Naive thymus-derived CD4-positive, alpha-beta T cell (primary cell): ENCODE measurements at regions of chr9 and their contacts with region 1.

Region 1: DNA sequence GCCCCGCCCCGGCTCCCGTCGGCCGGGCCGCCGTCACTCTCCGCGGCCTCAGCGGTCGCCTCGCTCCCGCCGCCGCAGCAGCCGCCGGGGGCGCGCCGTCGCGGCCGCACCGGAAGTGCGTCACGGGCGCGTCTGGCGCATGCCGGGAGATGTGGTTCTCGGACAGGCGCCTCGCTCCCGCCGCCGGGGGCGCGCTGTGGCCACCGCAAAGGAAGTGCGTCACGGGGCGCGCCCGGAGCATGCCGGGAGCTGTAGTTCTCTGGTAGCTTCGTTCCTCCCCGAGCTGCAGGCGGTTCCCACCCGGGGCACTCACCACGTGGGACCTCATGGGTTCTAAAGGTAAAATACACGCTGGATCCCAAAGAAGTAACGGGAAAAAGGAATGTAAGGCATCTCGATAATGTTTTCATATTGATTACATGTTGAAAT is at the start of gene UBAC1:
- DNase-seq: peak; percentile 91 to 96 (median 94)
- ATAC-seq: peak; percentile 97
- H3K4me3 ChIP-seq: peak within 1 kb of the TSS; percentile 65
- H3K4me3 Mint-ChIP-seq: peak within 1 kb of the TSS; percentile 78 to 93 (median 88)
- H3K27ac ChIP-seq: peak within 1 kb of the TSS; percentile 82
- H3K27ac Mint-ChIP-seq: peak within 1 kb of the TSS; percentile 74 to 94 (median 83)
- H3K4me1 ChIP-seq: peaks cover 15 to 16% of the 10 kb centered on the region in 2 donors
- H3K4me1 Mint-ChIP-seq: peaks cover 20 to 39% (median 30%) of the 10 kb centered on the region in 7 donors
- H3K27me3 ChIP-seq: no peaks in the 10 kb centered on the region
- H3K27me3 Mint-ChIP-seq: peaks cover 0 to 15% (median 0%) of the 10 kb centered on the region in 5 donors
- total RNA-seq, gene UBAC1: 28.6 to 36.1 (median 32.2) TPM

Region 2: GRCh38 chr9:135864447-135865049 is 96.7 kb before region 1 on chr9:
- CTCF ChIA-PET with region 1: interaction called, 4 read pairs
- POLR2A ChIA-PET with region 1: no interaction called
- intact Hi-C with region 1: loop called in 1 of 2 experiments (anchors 2 kb)
- DNase-seq: peak; percentile 20 to 70 (median 55)
- ATAC-seq: peak; percentile 74
- H3K4me3 ChIP-seq: no peak overlapping the region
- H3K4me3 Mint-ChIP-seq: no peak overlapping the region
- H3K27ac ChIP-seq: no peak overlapping the region
- H3K27ac Mint-ChIP-seq: no peak overlapping the region
- H3K4me1 ChIP-seq: peaks cover 0 to 4% of the 10 kb centered on the region in 2 donors
- H3K4me1 Mint-ChIP-seq: peaks cover 5 to 26% (median 17%) of the 10 kb centered on the region in 7 donors
- H3K27me3 ChIP-seq: no peaks in the 10 kb centered on the region
- H3K27me3 Mint-ChIP-seq: no peaks in the 10 kb centered on the region

Region 3: GRCh38 chr9:135887585-135888050 is 73.7 kb before region 1 on chr9:
- CTCF ChIA-PET with region 1: no interaction called
- POLR2A ChIA-PET with region 1: no interaction called
- intact Hi-C with region 1: loop called in 1 of 2 experiments (anchors 1 kb)
- DNase-seq: peak; percentile 40 to 75 (median 66)
- ATAC-seq: peak; percentile 91
- H3K4me3 ChIP-seq: peak overlapping the region; percentile 38
- H3K4me3 Mint-ChIP-seq: peak overlapping the region; percentile 68 to 94 (median 84)
- H3K27ac ChIP-seq: peak overlapping the region; percentile 69
- H3K27ac Mint-ChIP-seq: peak overlapping the region; percentile 66 to 96 (median 88)
- H3K4me1 ChIP-seq: peaks cover 11 to 23% of the 10 kb centered on the region in 2 donors
- H3K4me1 Mint-ChIP-seq: peaks cover 46 to 87% (median 77%) of the 10 kb centered on the region in 7 donors
- H3K27me3 ChIP-seq: no peaks in the 10 kb centered on the region
- H3K27me3 Mint-ChIP-seq: no peaks in the 10 kb centered on the region

Region 4: DNA sequence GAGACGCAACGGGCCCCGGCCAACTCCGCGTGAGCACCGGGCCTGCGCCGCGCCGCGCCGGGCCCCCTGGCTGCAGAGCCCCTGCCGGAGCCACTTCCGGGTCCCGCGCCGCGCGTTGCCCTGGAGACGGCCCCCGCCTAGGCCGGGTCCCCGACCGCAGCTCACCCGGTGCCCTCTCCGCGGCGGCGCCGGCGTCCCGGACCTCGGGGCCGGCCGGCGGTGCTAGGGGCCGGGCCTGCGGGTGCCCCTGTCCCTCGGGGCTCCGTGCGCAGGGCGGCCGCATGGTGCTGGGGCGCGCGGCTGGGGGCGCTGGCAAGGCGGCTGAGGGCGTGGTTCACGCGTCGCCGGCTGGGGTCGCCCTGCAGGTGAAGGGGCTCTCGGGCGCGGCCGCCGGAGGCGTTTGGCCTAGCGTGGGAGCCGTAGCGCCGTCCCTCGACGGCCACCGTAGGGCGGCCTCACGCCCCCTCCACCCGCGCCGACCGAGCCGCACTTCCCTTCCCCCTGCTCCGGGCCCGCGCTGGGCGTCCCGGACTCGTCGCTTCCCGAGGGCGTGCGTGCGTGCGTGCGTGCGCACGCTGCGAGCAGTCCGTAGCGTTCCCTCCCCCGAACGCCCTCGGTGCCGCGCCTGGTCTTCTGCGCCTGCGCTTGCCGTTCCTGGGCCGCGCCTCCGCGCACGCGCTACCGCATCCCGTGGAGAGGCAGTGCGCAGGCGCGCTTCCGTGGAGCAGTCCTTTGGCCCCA is 157.2 kb after region 1 on chr9 and contains the start of gene TMEM250:
- CTCF ChIA-PET with region 1: interaction called, 5 read pairs
- POLR2A ChIA-PET with region 1: interaction called, 7 read pairs
- intact Hi-C with region 1: loop called (anchors 1 kb)
- DNase-seq: peak; percentile 94 to 98 (median 97)
- ATAC-seq: peak; percentile 94
- H3K4me3 ChIP-seq: peak within 1 kb of the TSS; percentile 81
- H3K4me3 Mint-ChIP-seq: peak within 1 kb of the TSS; percentile 73 to 87 (median 84)
- H3K27ac ChIP-seq: peak within 1 kb of the TSS; percentile 87
- H3K27ac Mint-ChIP-seq: peak within 1 kb of the TSS; percentile 13 to 91 (median 84)
- H3K4me1 ChIP-seq: peaks cover 14 to 33% of the 10 kb centered on the region in 2 donors
- H3K4me1 Mint-ChIP-seq: peaks cover 3 to 26% (median 11%) of the 10 kb centered on the region in 7 donors
- H3K27me3 ChIP-seq: no peaks in the 10 kb centered on the region
- H3K27me3 Mint-ChIP-seq: no peaks in the 10 kb centered on the region
- total RNA-seq, gene TMEM250: 16.4 to 55.3 (median 41.3) TPM

Region 5: GRCh38 chr9:136267261-136268111 is 306.2 kb after region 1 on chr9:
- CTCF ChIA-PET with region 1: no interaction called
- POLR2A ChIA-PET with region 1: no interaction called
- intact Hi-C with region 1: loop called in 1 of 2 experiments (anchors 1 kb)
- DNase-seq: peak; percentile 70 to 85 (median 80)
- ATAC-seq: peak; percentile 99
- H3K4me3 ChIP-seq: peak overlapping the region; percentile 74
- H3K4me3 Mint-ChIP-seq: peak overlapping the region; percentile 70 to 84 (median 79)
- H3K27ac ChIP-seq: peak overlapping the region; percentile 62
- H3K27ac Mint-ChIP-seq: peak overlapping the region; percentile 57 to 89 (median 77)
- H3K4me1 ChIP-seq: peaks cover 4 to 7% of the 10 kb centered on the region in 2 donors
- H3K4me1 Mint-ChIP-seq: peaks cover 0 to 14% (median 3%) of the 10 kb centered on the region in 7 donors
- H3K27me3 ChIP-seq: no peaks in the 10 kb centered on the region
- H3K27me3 Mint-ChIP-seq: peaks cover 0 to 14% (median 0%) of the 10 kb centered on the region in 5 donors

Region 6: GRCh38 chr9:136283291-136284235 is 322.3 kb after region 1 on chr9:
- CTCF ChIA-PET with region 1: no interaction called
- POLR2A ChIA-PET with region 1: no interaction called
- intact Hi-C with region 1: loop called in 1 of 2 experiments (anchors 2 kb)
- DNase-seq: peak; percentile 22 to 77 (median 59)
- ATAC-seq: peak; percentile 91
- H3K4me3 ChIP-seq: no peak overlapping the region
- H3K4me3 Mint-ChIP-seq: peak overlapping the region in 4 of 10 donors; percentile 14 to 40 (median 22)
- H3K27ac ChIP-seq: no peak overlapping the region
- H3K27ac Mint-ChIP-seq: no peak overlapping the region
- H3K4me1 ChIP-seq: no peaks in the 10 kb centered on the region
- H3K4me1 Mint-ChIP-seq: peaks cover 0 to 7% (median 0%) of the 10 kb centered on the region in 7 donors
- H3K27me3 ChIP-seq: no peaks in the 10 kb centered on the region
- H3K27me3 Mint-ChIP-seq: peaks cover 0 to 12% (median 0%) of the 10 kb centered on the region in 5 donors

Region 7: DNA sequence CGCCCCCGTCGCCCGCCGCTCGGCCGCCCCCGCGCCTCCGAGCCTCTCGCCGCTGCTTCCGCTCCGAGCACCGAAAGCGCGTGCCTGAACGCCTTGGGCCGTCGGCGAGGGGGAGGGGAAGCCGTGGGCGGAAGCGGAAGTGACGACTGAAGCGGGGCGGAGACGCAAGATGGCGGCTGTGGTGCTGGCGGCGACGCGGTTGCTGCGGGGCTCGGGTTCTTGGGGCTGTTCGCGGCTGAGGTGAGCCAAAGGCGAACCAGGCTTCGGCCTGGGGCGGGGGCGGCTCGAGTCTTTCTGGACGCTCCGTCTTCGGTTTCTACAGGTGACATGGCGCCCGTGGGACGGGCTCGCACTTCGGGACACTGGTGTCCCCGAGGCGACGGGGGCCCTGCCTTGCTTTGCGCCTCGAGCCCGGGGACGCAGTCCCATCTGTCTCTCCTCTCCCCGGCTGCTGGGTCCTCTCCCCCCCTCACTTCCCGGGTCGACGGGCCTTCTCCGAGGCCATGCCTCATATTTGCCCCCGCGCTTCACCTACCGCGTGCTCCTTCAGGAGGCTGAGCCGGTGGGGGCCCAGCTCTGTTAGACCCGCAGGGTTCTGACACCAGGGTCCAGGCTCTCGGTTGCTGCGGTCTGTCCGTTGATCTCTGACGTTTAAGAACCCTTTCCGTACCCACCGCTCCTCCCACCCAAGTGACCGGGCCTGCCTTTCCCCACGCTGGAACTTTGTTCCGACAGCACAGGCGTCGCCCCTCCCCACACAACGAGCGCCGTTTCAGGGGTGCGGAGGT is 449.4 kb after region 1 on chr9 and contains the starts of genes ENTR1 and PMPCA:
- CTCF ChIA-PET with region 1: no interaction called
- POLR2A ChIA-PET with region 1: no interaction called
- intact Hi-C with region 1: loop called in 1 of 2 experiments (anchors 5 kb)
- DNase-seq: peak; percentile 90 to 99 (median 93)
- ATAC-seq: peak; percentile 94
- H3K4me3 ChIP-seq: peak within 1 kb of the TSS; percentile 96
- H3K4me3 Mint-ChIP-seq: peak within 1 kb of the TSS; percentile 83 to 93 (median 90)
- H3K27ac ChIP-seq: peak within 1 kb of the TSS; percentile 97
- H3K27ac Mint-ChIP-seq: peak within 1 kb of the TSS; percentile 78 to 95 (median 90)
- H3K4me1 ChIP-seq: peaks cover 18 to 26% of the 10 kb centered on the region in 2 donors
- H3K4me1 Mint-ChIP-seq: peaks cover 34 to 56% (median 45%) of the 10 kb centered on the region in 7 donors
- H3K27me3 ChIP-seq: no peaks in the 10 kb centered on the region
- H3K27me3 Mint-ChIP-seq: no peaks in the 10 kb centered on the region
- total RNA-seq, gene ENTR1: 56.3 to 89.0 (median 66.6) TPM
- total RNA-seq, gene PMPCA: 60.5 to 86.3 (median 71.6) TPM

Region 8: GRCh38 chr9:137326445-137327065 is 1365.3 kb after region 1 on chr9:
- CTCF ChIA-PET with region 1: no interaction called
- POLR2A ChIA-PET with region 1: no interaction called
- intact Hi-C with region 1: no loop called
- DNase-seq: peak in 2 of 9 donors; percentile 28 to 37
- ATAC-seq: peak; percentile 94
- H3K4me3 ChIP-seq: no peak overlapping the region
- H3K4me3 Mint-ChIP-seq: peak overlapping the region; percentile 3 to 88 (median 63)
- H3K27ac ChIP-seq: no peak overlapping the region
- H3K27ac Mint-ChIP-seq: peak overlapping the region in 6 of 9 donors; percentile 22 to 89 (median 72)
- H3K4me1 ChIP-seq: no peaks in the 10 kb centered on the region
- H3K4me1 Mint-ChIP-seq: peaks cover 4 to 16% (median 9%) of the 10 kb centered on the region in 7 donors
- H3K27me3 ChIP-seq: peaks cover 0 to 14% of the 10 kb centered on the region in 2 donors
- H3K27me3 Mint-ChIP-seq: peaks cover 0 to 23% (median 2%) of the 10 kb centered on the region in 5 donors